ENCODE measurements at regions of chr7 and their contacts with region 1.

Region 1: DNA sequence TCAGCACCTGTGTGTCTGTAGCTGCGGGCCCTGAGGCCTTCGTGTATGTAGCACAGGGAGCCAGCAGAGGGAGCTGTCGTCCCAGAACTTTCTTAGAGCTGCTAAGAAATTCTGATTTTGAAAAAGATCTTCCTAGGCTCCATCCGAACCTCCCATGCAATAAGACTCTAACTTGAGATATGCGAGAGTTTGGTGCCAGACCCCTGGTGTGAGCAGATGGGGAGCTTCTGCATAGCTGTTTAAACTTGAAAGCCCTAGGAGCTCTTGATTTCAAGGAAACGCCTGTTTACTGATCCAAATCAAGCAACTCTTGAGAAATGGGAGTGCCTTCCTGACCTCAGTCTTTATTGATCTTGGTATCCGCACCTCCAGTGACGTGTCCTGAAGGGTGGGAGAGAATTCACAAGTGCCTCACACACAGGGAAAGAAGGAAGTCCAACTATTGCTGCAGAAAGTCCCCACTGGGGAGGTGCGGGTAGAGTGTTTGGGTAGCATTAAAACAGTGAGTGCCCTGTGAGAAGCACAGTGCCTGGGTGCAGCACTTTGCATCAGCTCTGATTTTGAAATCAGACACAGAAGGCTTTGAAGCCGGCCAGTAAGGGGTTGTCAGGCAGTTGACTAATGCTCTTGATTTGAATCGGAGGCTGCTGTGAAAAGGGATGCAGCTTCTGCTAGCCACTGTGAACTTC is 66.4 kb upstream of the STRIP2 start:
- DNase-seq: peak; percentile 82
- H3K4me3 Mint-ChIP-seq: peak overlapping the region; percentile 62
- H3K27ac Mint-ChIP-seq: peak overlapping the region; percentile 83
- H3K4me1 Mint-ChIP-seq: peaks cover 37% of the 10 kb centered on the region
- H3K27me3 Mint-ChIP-seq: no peaks in the 10 kb centered on the region

Region 2: DNA sequence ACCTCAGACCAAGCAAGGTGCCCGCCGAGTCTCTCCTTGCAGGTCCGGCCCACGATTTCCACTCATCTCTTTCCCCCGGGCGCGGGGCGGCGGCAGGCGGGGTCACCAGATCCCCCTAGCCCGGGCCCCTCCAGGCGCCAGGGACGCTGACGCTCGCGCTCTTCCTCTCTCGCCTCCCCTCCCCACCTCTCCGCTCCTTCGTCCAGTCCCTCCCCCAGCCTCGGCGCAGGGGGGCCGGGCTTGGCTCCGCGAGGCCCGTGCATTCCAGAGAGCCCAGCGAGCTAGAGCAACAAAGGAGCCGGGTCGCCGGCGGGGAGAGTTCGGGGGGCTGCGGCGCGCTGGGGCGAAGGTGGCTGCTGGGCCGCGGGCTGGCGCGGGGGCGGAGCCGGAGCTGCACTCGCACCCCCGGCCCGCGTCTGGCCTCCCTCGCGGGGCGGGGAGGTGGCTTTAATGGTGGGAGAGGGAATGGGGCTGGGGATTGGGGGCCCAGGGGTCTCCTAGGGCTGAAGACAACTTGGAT is 179.4 kb before region 1 on chr7 and contains the start of gene SMO:
- CTCF ChIA-PET with region 1: no interaction called
- POLR2A ChIA-PET with region 1: no interaction called
- DNase-seq: no peak
- H3K4me3 Mint-ChIP-seq: peak within 1 kb of the TSS; percentile 35
- H3K27ac Mint-ChIP-seq: no peak within 1 kb of the TSS
- H3K4me1 Mint-ChIP-seq: peaks cover 4% of the 10 kb centered on the region
- H3K27me3 Mint-ChIP-seq: peaks cover 55% of the 10 kb centered on the region
- total RNA-seq, gene SMO: not detected

Region 3: GRCh38 chr7:129401967-129402860 is 34.4 kb after region 1 on chr7:
- CTCF ChIA-PET with region 1: interaction called, 13 read pairs
- POLR2A ChIA-PET with region 1: no interaction called
- DNase-seq: peak; percentile 18
- H3K4me3 Mint-ChIP-seq: no peak overlapping the region
- H3K27ac Mint-ChIP-seq: no peak overlapping the region
- H3K4me1 Mint-ChIP-seq: peaks cover 8% of the 10 kb centered on the region
- H3K27me3 Mint-ChIP-seq: no peaks in the 10 kb centered on the region

Region 4: GRCh38 chr7:129462420-129462819 is 94.6 kb after region 1 on chr7:
- CTCF ChIA-PET with region 1: interaction called, 17 read pairs
- POLR2A ChIA-PET with region 1: no interaction called
- DNase-seq: no peak
- H3K4me3 Mint-ChIP-seq: no peak overlapping the region
- H3K27ac Mint-ChIP-seq: no peak overlapping the region
- H3K4me1 Mint-ChIP-seq: no peaks in the 10 kb centered on the region
- H3K27me3 Mint-ChIP-seq: no peaks in the 10 kb centered on the region

Region 5: GRCh38 chr7:129471402-129471827 is 103.6 kb after region 1 on chr7:
- CTCF ChIA-PET with region 1: interaction called, 27 read pairs
- POLR2A ChIA-PET with region 1: no interaction called
- DNase-seq: no peak
- H3K4me3 Mint-ChIP-seq: no peak overlapping the region
- H3K27ac Mint-ChIP-seq: no peak overlapping the region
- H3K4me1 Mint-ChIP-seq: peaks cover 5% of the 10 kb centered on the region
- H3K27me3 Mint-ChIP-seq: no peaks in the 10 kb centered on the region